Thyroid gland (tissue), 4 donors: ENCODE measurements at regions of chr3 and their contacts with region 1.

Region 1: GRCh38 chr3:107064445-107065060 is 312.7 kb upstream of the CCDC54 start:
- DNase-seq: peak; percentile 54 to 67
- H3K4me3 ChIP-seq: no peak overlapping the region
- H3K27ac ChIP-seq: peak overlapping the region in 1 of 3 donors; percentile 13
- H3K4me1 ChIP-seq: no peaks in the 10 kb centered on the region
- H3K27me3 ChIP-seq: no peaks in the 10 kb centered on the region
- CTCF ChIP-seq: peak; percentile 63 to 82 (median 74)
- POLR2A ChIP-seq: no peak

Region 2: GRCh38 chr3:106719077-106719476 is 345.5 kb before region 1 on chr3:
- intact Hi-C with region 1: no loop called
- DNase-seq: no peak
- H3K4me3 ChIP-seq: no peak overlapping the region
- H3K27ac ChIP-seq: no peak overlapping the region
- H3K4me1 ChIP-seq: no peaks in the 10 kb centered on the region
- H3K27me3 ChIP-seq: no peaks in the 10 kb centered on the region
- CTCF ChIP-seq: no peak
- POLR2A ChIP-seq: no peak

Region 3: DNA sequence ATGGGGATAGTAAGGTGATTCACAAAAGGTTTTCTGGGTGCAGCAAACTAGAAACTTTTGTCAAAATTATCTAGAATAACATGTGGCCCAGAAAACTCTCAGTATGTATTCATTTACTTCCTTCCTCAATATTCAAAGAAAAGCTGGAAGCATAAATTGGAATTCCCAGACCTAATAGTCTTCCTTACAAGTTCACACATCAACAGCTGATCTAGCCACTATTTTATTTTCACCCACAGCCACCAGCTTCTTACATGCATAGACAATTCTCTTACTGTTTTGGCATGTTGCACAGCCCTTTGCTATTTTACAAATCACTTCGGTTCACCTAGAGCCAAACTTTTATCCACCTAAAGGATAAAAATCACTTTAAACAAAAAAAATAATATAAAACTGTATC is 335.1 kb before region 1 on chr3:
- intact Hi-C with region 1: no loop called
- DNase-seq: no peak
- H3K4me3 ChIP-seq: no peak overlapping the region
- H3K27ac ChIP-seq: no peak overlapping the region
- H3K4me1 ChIP-seq: no peaks in the 10 kb centered on the region
- H3K27me3 ChIP-seq: no peaks in the 10 kb centered on the region
- CTCF ChIP-seq: no peak
- POLR2A ChIP-seq: no peak

Region 4: GRCh38 chr3:106824856-106825255 is 239.7 kb before region 1 on chr3:
- intact Hi-C with region 1: loop called (anchors 10 kb)
- DNase-seq: peak in 1 of 2 donors; percentile 29
- H3K4me3 ChIP-seq: no peak overlapping the region
- H3K27ac ChIP-seq: no peak overlapping the region
- H3K4me1 ChIP-seq: peaks cover 0 to 3% of the 10 kb centered on the region in 2 donors
- H3K27me3 ChIP-seq: no peaks in the 10 kb centered on the region
- CTCF ChIP-seq: peak in 4 of 6 experiments; percentile 6 to 36 (median 27)
- POLR2A ChIP-seq: no peak